Activated naive CD4-positive, alpha-beta T cell treated with anti-CD3 and anti-CD28 coated beads for 36 hours (primary cell): ENCODE measurements at regions of chr4 and their contacts with region 1.

Region 1: DNA sequence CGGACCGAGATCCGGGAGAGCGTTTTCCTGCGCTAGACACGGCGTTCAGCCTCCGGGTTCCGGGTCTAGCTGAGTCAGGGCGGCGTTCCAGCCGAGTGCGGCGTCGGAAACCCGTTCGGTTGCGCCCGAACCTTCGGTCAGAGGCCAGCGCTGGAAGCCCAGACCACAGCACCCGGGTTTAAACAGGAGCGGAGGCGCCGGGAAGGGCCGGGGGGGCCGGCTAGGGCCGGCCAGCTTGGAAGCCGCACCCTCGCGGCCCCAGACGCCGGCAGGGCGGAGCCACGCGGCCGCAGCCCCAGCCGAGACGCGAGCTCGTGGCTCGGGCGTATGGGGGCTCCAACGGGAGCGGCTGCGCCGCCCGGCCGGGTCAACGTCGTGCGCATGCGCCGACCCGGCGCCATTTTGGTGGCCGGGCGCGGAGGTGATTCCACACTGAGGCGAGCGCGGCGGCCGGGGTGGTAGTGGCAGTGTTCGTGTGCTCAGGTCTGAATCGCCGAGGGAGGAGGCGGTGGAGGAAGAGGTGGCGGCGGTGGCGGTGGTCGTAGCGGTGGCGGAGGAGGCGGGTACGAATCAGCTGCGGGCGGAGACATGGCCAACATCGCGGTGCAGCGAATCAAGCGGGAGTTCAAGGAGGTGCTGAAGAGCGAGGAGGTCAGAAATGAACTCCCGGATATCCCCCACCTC is at the start of gene UBE2K:
- DNase-seq: peak; percentile 85
- H3K4me3 Mint-ChIP-seq: peak within 1 kb of the TSS; percentile 98
- H3K27ac Mint-ChIP-seq: peak within 1 kb of the TSS; percentile 98
- H3K4me1 Mint-ChIP-seq: peaks cover 32% of the 10 kb centered on the region
- H3K27me3 Mint-ChIP-seq: no peaks in the 10 kb centered on the region
- total RNA-seq, gene UBE2K: 60.6 to 69.5 TPM

Region 2: DNA sequence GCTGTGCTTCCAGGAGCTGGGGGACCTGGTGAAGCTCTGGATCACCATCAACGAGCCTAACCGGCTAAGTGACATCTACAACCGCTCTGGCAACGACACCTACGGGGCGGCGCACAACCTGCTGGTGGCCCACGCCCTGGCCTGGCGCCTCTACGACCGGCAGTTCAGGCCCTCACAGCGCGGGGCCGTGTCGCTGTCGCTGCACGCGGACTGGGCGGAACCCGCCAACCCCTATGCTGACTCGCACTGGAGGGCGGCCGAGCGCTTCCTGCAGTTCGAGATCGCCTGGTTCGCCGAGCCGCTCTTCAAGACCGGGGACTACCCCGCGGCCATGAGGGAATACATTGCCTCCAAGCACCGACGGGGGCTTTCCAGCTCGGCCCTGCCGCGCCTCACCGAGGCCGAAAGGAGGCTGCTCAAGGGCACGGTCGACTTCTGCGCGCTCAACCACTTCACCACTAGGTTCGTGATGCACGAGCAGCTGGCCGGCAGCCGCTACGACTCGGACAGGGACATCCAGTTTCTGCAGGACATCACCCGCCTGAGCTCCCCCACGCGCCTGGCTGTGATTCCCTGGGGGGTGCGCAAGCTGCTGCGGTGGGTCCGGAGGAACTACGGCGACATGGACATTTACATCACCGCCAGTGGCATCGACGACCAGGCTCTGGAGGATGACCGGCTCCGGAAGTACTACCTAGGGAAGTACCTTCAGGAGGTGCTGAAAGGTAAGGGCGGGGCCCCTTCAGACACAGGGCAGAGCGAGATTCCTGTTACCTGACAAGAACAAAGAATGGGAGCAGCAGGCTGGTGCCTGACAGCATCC is 250.9 kb before region 1 on chr4:
- CTCF ChIA-PET with region 1: no interaction called
- intact Hi-C with region 1: no loop called
- DNase-seq: peak; percentile 74
- H3K4me3 Mint-ChIP-seq: peak overlapping the region; percentile 32
- H3K27ac Mint-ChIP-seq: no peak overlapping the region
- H3K4me1 Mint-ChIP-seq: peaks cover 22% of the 10 kb centered on the region
- H3K27me3 Mint-ChIP-seq: no peaks in the 10 kb centered on the region

Region 3: DNA sequence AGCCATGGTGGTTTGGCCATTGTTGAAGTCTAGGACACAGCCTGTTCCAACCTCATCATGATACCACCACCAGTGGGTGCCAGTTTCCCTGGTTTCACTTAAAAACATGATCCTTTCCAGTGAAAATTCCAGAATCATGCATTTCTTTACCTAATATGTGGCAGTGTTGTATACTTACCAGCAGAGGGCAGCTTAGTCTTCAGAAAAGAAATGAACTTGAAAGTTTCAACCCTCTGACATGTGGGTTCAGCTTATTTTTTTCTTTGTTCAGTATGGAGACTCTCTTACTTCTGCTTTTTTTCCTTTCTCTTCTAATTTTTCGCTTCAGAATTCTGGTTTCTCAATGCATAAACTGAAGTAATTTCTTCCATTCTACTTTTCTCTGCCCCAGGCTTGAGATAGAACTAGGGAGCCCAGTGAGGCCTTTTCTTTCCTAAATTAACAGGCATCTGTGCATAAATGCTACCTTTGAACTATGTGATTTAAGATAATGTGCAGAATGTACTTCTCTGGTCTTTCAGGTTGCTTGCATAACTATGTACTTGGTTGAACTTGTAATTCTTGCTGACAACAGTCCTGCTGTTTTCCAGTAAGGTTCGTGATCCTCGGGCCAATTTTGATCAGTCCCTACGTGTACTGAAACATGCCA is 228.3 kb before region 1 on chr4:
- CTCF ChIA-PET with region 1: no interaction called
- intact Hi-C with region 1: loop called (anchors 1 kb)
- DNase-seq: peak; percentile 24
- H3K4me3 Mint-ChIP-seq: no peak overlapping the region
- H3K27ac Mint-ChIP-seq: peak overlapping the region; percentile 37
- H3K4me1 Mint-ChIP-seq: peaks cover 12% of the 10 kb centered on the region
- H3K27me3 Mint-ChIP-seq: no peaks in the 10 kb centered on the region

Region 4: GRCh38 chr4:39527273-39528060 is 170.4 kb before region 1 on chr4 and contains the start of gene UGDH:
- CTCF ChIA-PET with region 1: no interaction called
- intact Hi-C with region 1: loop called (anchors 1 kb)
- DNase-seq: peak; percentile 91
- H3K4me3 Mint-ChIP-seq: peak within 1 kb of the TSS; percentile 97
- H3K27ac Mint-ChIP-seq: peak within 1 kb of the TSS; percentile 81
- H3K4me1 Mint-ChIP-seq: peaks cover 18% of the 10 kb centered on the region
- H3K27me3 Mint-ChIP-seq: no peaks in the 10 kb centered on the region
- total RNA-seq, gene UGDH: 11.7 to 14.6 TPM

Region 5: DNA sequence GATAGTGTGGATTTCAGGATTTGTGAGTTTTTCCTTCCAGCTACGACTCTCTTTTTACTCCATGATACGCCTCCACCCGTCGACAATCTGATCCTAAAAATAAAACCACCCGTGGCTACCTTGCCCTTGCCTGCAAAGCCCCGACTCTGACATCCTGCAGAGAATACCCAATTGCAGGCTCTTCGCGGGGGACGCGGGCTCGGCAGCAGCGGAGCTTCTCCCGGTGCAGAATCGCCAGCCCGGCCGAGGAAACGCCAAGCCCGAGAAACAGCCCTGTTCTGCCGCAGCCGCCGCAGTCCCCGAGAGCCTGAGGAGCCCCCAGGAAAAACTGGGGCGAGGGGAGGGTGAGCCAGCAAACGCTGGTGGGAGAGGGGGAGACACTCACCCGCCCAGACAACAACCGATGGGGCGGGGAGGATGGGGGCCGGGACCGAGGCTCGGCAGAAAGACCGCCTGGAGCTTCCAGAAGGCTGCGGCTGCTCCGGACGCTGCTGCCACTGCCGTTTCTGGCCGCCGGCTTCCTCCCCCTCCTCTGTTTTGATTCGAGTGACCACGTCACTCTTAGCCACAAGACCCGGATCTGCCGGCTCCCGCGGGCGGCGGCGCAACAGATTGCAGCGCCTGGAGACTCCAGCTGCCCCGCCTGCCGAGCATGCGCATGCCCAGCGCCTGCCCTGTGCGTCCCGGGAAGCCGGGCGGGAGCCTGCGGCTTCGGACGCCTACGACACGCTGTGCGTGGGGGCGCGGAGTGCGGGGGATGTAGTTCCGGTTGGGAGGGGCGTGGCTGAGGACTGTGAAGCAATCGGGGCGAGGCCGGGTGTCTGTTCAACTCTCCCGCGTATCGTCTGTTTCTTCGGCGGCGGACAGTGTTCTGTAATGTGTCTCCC is 59.3 kb before region 1 on chr4 and contains the start of gene SMIM14:
- CTCF ChIA-PET with region 1: interaction called, 3 read pairs
- intact Hi-C with region 1: loop called (anchors 1 kb)
- DNase-seq: peak; percentile 93
- H3K4me3 Mint-ChIP-seq: peak within 1 kb of the TSS; percentile 85
- H3K27ac Mint-ChIP-seq: peak within 1 kb of the TSS; percentile 69
- H3K4me1 Mint-ChIP-seq: peaks cover 24% of the 10 kb centered on the region
- H3K27me3 Mint-ChIP-seq: no peaks in the 10 kb centered on the region
- total RNA-seq, gene SMIM14: 2.7 to 3.9 TPM

Region 6: GRCh38 chr4:39718366-39719323 is 20.8 kb after region 1 on chr4:
- CTCF ChIA-PET with region 1: no interaction called
- intact Hi-C with region 1: loop called (anchors 1 kb)
- DNase-seq: peak; percentile 18
- H3K4me3 Mint-ChIP-seq: no peak overlapping the region
- H3K27ac Mint-ChIP-seq: no peak overlapping the region
- H3K4me1 Mint-ChIP-seq: peaks cover 47% of the 10 kb centered on the region
- H3K27me3 Mint-ChIP-seq: no peaks in the 10 kb centered on the region

Region 7: GRCh38 chr4:39883646-39884045 is 185.8 kb after region 1 on chr4:
- CTCF ChIA-PET with region 1: no interaction called
- intact Hi-C with region 1: no loop called
- DNase-seq: no peak
- H3K4me3 Mint-ChIP-seq: no peak overlapping the region
- H3K27ac Mint-ChIP-seq: no peak overlapping the region
- H3K4me1 Mint-ChIP-seq: no peaks in the 10 kb centered on the region
- H3K27me3 Mint-ChIP-seq: no peaks in the 10 kb centered on the region

Region 8: DNA sequence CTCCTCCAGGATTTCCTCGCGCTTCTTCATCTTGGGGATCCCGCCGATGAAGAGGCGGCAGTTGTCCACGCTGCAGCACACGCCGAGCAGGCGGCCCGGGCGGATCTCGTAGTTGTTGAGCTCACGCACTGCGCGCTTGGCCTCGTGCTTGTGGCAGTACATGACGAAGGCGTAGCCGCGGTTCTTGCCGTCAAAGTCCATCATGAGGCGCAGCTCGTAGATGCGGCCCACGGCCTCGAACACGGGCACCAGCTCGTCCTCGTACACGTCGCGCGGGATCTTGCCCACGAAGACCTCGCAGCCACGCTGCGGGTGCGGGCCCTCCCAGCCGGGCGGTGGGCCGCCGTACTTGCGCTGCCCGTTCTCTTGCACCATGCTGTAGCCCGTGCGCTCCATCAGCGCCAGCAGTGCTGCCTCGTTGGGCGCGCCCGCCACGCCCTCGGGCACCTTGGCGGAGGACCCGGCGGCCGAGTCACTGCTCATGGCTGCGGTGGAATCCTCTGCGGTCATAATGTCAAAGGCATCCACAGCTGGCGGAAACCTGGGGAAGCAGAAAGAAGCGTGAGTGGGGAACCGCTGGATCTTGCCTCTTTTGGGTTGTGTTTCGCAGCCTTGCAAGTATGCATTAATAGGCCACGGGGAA is 740.6 kb after region 1 on chr4:
- CTCF ChIA-PET with region 1: no interaction called
- intact Hi-C with region 1: loop called (anchors 1 kb)
- DNase-seq: no peak
- H3K4me3 Mint-ChIP-seq: no peak overlapping the region
- H3K27ac Mint-ChIP-seq: no peak overlapping the region
- H3K4me1 Mint-ChIP-seq: peaks cover 36% of the 10 kb centered on the region
- H3K27me3 Mint-ChIP-seq: no peaks in the 10 kb centered on the region

Region 9: DNA sequence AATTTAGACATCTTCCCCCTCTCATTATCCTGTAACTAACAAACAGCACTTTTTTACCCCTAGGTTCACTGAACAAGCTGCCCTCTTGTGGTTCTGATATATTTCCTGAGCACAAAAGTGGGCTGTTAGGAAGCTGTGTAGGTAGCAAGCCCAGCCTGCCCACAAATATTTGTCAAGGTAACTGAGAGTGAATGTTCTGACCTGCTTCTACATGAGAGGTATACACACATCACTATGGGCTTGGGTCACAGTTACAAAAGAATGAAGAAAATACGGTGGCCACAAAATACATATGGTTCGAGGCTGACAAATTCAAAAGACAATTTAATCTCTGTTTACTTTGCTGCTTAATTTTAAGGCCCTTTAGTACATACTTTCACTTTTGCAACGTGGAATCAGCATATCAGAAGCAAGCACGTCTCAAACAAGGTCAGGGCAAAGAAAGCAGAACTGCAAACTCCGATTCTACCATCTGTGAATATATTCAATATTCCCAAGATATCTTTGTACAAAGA is 853.1 kb after region 1 on chr4:
- CTCF ChIA-PET with region 1: no interaction called
- intact Hi-C with region 1: loop called (anchors 5 kb)
- DNase-seq: peak; percentile 34
- H3K4me3 Mint-ChIP-seq: peak overlapping the region; percentile 60
- H3K27ac Mint-ChIP-seq: peak overlapping the region; percentile 55
- H3K4me1 Mint-ChIP-seq: peaks cover 28% of the 10 kb centered on the region
- H3K27me3 Mint-ChIP-seq: no peaks in the 10 kb centered on the region